Heart left ventricle (tissue), 16 donors: ENCODE measurements at regions of chr17 and their contacts with region 1.

Region 1: GRCh38 chr17:39668199-39668966 is at the start of gene PNMT:
- DNase-seq: peak; percentile 78 to 88 (median 83)
- ATAC-seq: peak in 1 of 4 donors; percentile 8
- H3K4me3 ChIP-seq: peak within 1 kb of the TSS; percentile 36 to 78 (median 64)
- H3K27ac ChIP-seq: peak within 1 kb of the TSS; percentile 85 to 99 (median 96)
- H3K4me1 ChIP-seq: peaks cover 0 to 83% (median 34%) of the 10 kb centered on the region in 12 donors
- H3K27me3 ChIP-seq: peaks cover 0 to 40% (median 11%) of the 10 kb centered on the region in 9 donors
- CTCF ChIP-seq: peak; percentile 52 to 78 (median 64)
- POLR2A ChIP-seq: no peak
- total RNA-seq, gene PNMT: 2.4 to 7.9 (median 6.0) TPM

Region 2: GRCh38 chr17:37761059-37761458 is 1907.3 kb before region 1 on chr17:
- intact Hi-C with region 1: no loop called
- DNase-seq: no peak
- ATAC-seq: no peak
- H3K4me3 ChIP-seq: no peak overlapping the region
- H3K27ac ChIP-seq: no peak overlapping the region
- H3K4me1 ChIP-seq: peaks cover 0 to 11% (median 0%) of the 10 kb centered on the region in 12 donors
- H3K27me3 ChIP-seq: peaks cover 0 to 59% (median 8%) of the 10 kb centered on the region in 9 donors
- CTCF ChIP-seq: no peak
- POLR2A ChIP-seq: no peak

Region 3: GRCh38 chr17:39636927-39637736 is 31.3 kb before region 1 on chr17 and contains the start of gene STARD3:
- intact Hi-C with region 1: loop called in 2 of 10 experiments (anchors 5 kb)
- DNase-seq: peak; percentile 94 to 97 (median 95)
- ATAC-seq: peak; percentile 90 to 97 (median 96)
- H3K4me3 ChIP-seq: peak within 1 kb of the TSS; percentile 56 to 95 (median 82)
- H3K27ac ChIP-seq: peak within 1 kb of the TSS; percentile 74 to 96 (median 92)
- H3K4me1 ChIP-seq: peaks cover 10 to 62% (median 48%) of the 10 kb centered on the region in 12 donors
- H3K27me3 ChIP-seq: no peaks in the 10 kb centered on the region
- CTCF ChIP-seq: peak in 7 of 12 donors; percentile 15 to 52 (median 32)
- POLR2A ChIP-seq: peak in 1 of 2 donors; percentile 77
- total RNA-seq, gene STARD3: 14.1 to 36.5 (median 19.3) TPM

Region 4: GRCh38 chr17:40317880-40318829 is 649.8 kb after region 1 on chr17:
- intact Hi-C with region 1: loop called in 1 of 10 experiments (anchors 10 kb)
- DNase-seq: peak; percentile 96 to 98 (median 97)
- ATAC-seq: peak; percentile 87 to 93 (median 92)
- H3K4me3 ChIP-seq: peak overlapping the region; percentile 76 to 100 (median 88)
- H3K27ac ChIP-seq: peak overlapping the region; percentile 90 to 99 (median 95)
- H3K4me1 ChIP-seq: peaks cover 15 to 96% (median 84%) of the 10 kb centered on the region in 12 donors
- H3K27me3 ChIP-seq: no peaks in the 10 kb centered on the region
- CTCF ChIP-seq: no peak
- POLR2A ChIP-seq: peak; percentile 27 to 92